ENCODE measurements at regions of chr11 and their contacts with region 1.

Region 1: GRCh38 chr11:62805076-62805892 is at the start of gene NXF1:
- DNase-seq: peak; percentile 95
- H3K4me3 Mint-ChIP-seq: peak within 1 kb of the TSS; percentile 98
- H3K27ac Mint-ChIP-seq: peak within 1 kb of the TSS; percentile 94
- H3K4me1 Mint-ChIP-seq: peaks cover 30% of the 10 kb centered on the region
- H3K27me3 Mint-ChIP-seq: no peaks in the 10 kb centered on the region
- total RNA-seq, gene NXF1: 134 and 139 TPM in 2 replicates

Region 2: GRCh38 chr11:62487738-62488551 is 317.3 kb before region 1 on chr11:
- intact Hi-C with region 1: no loop called
- DNase-seq: no peak
- H3K4me3 Mint-ChIP-seq: no peak overlapping the region
- H3K27ac Mint-ChIP-seq: no peak overlapping the region
- H3K4me1 Mint-ChIP-seq: peaks cover 1% of the 10 kb centered on the region
- H3K27me3 Mint-ChIP-seq: peaks cover 3% of the 10 kb centered on the region

Region 3: GRCh38 chr11:62831520-62832335 is 26.4 kb after region 1 on chr11 and contains the start of gene STX5:
- intact Hi-C with region 1: loop called (anchors 2 kb)
- DNase-seq: peak; percentile 99
- H3K4me3 Mint-ChIP-seq: peak within 1 kb of the TSS; percentile 94
- H3K27ac Mint-ChIP-seq: peak within 1 kb of the TSS; percentile 99
- H3K4me1 Mint-ChIP-seq: peaks cover 23% of the 10 kb centered on the region
- H3K27me3 Mint-ChIP-seq: no peaks in the 10 kb centered on the region
- total RNA-seq, gene STX5: 37.4 and 41.9 TPM in 2 replicates

Region 4: DNA sequence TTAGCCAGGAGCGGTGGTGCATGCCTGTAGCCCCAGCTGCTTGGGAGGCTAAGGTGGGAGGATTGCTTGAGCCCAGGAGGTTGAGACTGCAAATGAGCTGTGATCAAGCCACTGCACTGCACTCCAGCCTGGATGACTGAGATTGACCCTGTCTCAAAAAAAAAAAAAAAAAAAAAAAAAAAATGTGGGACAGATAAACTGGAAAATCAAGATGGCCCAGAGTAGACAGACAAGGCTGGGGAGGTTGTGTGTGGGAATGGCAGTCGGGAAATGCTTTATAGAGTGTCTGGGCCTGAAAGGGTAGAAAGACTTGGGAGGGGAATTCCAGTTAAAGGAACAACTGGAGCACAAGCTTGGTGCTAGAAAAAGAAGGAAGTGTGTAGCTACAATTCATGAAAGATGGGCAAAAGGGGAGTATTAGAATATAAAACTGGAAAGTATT is 52.3 kb after region 1 on chr11:
- intact Hi-C with region 1: no loop called
- DNase-seq: no peak
- H3K4me3 Mint-ChIP-seq: peak overlapping the region; percentile 96
- H3K27ac Mint-ChIP-seq: peak overlapping the region; percentile 56
- H3K4me1 Mint-ChIP-seq: peaks cover 48% of the 10 kb centered on the region
- H3K27me3 Mint-ChIP-seq: no peaks in the 10 kb centered on the region